ENCODE measurements at regions of chr5 and their contacts with region 1.

Region 1: DNA sequence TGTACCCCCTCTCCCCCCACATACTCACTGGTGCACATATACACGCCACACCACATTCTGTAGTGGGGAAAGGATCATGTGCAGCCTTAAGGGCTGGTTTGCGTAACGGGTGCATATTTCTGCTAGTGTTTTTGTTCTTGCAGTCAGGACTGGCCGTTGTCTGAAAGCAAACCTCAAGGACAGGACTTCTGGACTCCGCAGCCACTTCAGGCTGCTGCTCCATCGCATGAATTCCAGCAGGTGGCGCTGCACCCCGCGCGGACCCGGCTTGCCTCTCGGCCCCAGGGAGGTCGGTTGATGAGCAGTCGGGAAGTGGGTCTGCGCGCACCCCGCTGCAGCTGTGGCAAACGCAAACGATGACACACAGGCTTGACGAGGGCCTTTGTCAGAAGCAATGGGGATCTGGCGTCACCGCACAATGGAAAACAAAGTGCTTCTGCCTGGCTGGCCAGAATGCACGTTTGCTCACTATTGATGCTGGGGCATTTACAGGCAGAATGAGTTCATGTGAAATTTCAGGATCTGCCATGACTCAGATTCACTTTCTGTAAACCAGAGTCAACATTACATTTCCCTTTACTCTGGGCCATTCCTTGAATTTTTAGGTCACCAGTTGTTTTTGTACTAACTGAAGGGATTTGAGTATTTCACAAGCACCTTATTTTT is 36.3 kb upstream of the GLRX start:
- DNase-seq: peak; percentile 76 to 95 (median 92)
- ATAC-seq: peak; percentile 98
- H3K4me3 ChIP-seq: no peak overlapping the region
- H3K4me3 Mint-ChIP-seq: peak overlapping the region; percentile 47
- H3K27ac ChIP-seq: no peak overlapping the region
- H3K27ac Mint-ChIP-seq: peak overlapping the region; percentile 34
- H3K4me1 ChIP-seq: peaks cover 9% of the 10 kb centered on the region
- H3K4me1 Mint-ChIP-seq: peaks cover 25% of the 10 kb centered on the region
- H3K27me3 ChIP-seq: no peaks in the 10 kb centered on the region
- H3K27me3 Mint-ChIP-seq: peaks cover 10% of the 10 kb centered on the region
- CTCF ChIP-seq: peak; percentile 93

Region 2: DNA sequence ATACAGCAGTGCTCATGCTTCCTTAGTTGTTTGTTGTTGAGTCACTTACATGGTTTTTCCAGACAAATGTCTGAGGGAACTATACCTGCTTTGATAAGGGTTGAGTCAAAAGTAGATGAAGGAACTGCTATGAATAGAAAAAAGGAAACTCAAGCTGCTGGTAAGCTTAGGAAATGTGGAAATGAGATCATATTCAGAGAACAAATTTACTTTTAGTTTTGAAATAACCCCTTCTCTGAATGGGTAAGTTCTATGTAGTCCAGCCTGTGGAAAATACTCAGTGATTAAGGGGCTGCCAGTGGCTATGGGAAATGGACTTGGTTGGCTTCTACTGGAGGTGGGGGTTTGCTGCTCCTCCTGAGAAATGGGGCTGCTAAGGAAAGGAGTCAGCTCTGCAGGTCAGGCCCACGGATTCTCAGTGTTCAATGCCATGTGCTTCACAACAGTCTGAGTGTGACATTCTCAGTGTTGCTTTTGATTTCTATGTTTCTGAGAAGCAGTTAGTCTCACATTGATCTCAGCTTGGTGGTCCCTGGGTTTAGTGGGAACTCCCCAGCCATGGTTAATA is 11.4 kb after region 1 on chr5:
- CTCF ChIA-PET with region 1: interaction called, 20 read pairs
- POLR2A ChIA-PET with region 1: interaction called, 5 read pairs
- intact Hi-C with region 1: loop called (anchors 1 kb)
- DNase-seq: peak in 1 of 9 experiments; percentile 35
- ATAC-seq: peak; percentile 33
- H3K4me3 ChIP-seq: no peak overlapping the region
- H3K4me3 Mint-ChIP-seq: peak overlapping the region; percentile 53
- H3K27ac ChIP-seq: no peak overlapping the region
- H3K27ac Mint-ChIP-seq: no peak overlapping the region
- H3K4me1 ChIP-seq: peaks cover 32% of the 10 kb centered on the region
- H3K4me1 Mint-ChIP-seq: peaks cover 31% of the 10 kb centered on the region
- H3K27me3 ChIP-seq: no peaks in the 10 kb centered on the region
- H3K27me3 Mint-ChIP-seq: no peaks in the 10 kb centered on the region
- CTCF ChIP-seq: no peak

Region 3: DNA sequence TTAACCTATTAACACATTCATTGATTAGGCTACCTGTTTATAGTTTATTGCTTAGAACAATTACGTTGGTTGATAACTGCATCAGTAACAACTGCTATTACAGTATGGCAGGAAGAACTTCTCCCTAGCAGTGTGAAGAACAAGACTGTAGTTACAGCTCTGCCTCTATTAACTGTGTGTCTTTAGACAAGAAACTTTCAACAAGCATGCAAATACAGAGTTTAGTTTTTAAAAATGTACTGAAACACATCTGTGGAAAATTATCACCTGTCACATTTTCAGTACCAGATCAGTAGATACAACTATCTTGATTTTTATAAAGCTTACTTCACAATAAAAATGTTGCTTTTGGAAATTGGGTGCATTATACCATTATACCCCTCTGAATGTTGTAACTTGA is 80.7 kb after region 1 on chr5:
- CTCF ChIA-PET with region 1: no interaction called
- POLR2A ChIA-PET with region 1: no interaction called
- intact Hi-C with region 1: no loop called
- DNase-seq: no peak
- ATAC-seq: no peak
- H3K4me3 ChIP-seq: no peak overlapping the region
- H3K4me3 Mint-ChIP-seq: no peak overlapping the region
- H3K27ac ChIP-seq: no peak overlapping the region
- H3K27ac Mint-ChIP-seq: no peak overlapping the region
- H3K4me1 ChIP-seq: no peaks in the 10 kb centered on the region
- H3K4me1 Mint-ChIP-seq: no peaks in the 10 kb centered on the region
- H3K27me3 ChIP-seq: no peaks in the 10 kb centered on the region
- H3K27me3 Mint-ChIP-seq: no peaks in the 10 kb centered on the region
- CTCF ChIP-seq: no peak

Region 4: DNA sequence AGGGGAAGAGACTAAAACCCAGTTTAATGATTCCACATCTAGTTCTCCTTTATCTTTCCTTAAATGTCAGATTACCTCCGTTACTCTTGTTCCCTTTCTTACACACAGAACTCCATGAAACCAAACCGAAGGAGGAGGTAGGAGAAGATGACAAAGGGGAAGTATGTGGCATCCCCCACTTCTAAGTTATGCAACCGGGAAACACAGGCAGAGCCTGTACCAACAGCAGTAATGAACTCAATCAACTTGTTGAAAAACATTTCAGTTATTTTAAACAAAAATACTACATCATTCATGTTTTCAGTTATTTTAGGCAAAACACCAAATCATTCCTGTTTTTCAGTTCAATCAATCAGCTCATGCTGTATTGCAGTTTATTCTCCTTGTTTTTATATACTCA is 472.4 kb after region 1 on chr5:
- CTCF ChIA-PET with region 1: interaction called, 312 read pairs
- POLR2A ChIA-PET with region 1: no interaction called
- intact Hi-C with region 1: loop called (anchors 1 kb)
- DNase-seq: no peak
- ATAC-seq: no peak
- H3K4me3 ChIP-seq: no peak overlapping the region
- H3K4me3 Mint-ChIP-seq: no peak overlapping the region
- H3K27ac ChIP-seq: no peak overlapping the region
- H3K27ac Mint-ChIP-seq: no peak overlapping the region
- H3K4me1 ChIP-seq: no peaks in the 10 kb centered on the region
- H3K4me1 Mint-ChIP-seq: no peaks in the 10 kb centered on the region
- H3K27me3 ChIP-seq: peaks cover 0 to 4% of the 10 kb centered on the region in 2 experiments
- H3K27me3 Mint-ChIP-seq: peaks cover 12% of the 10 kb centered on the region
- CTCF ChIP-seq: no peak

Region 5: GRCh38 chr5:96463106-96463505 is 604.3 kb after region 1 on chr5:
- CTCF ChIA-PET with region 1: no interaction called
- POLR2A ChIA-PET with region 1: no interaction called
- intact Hi-C with region 1: no loop called
- DNase-seq: no peak
- ATAC-seq: no peak
- H3K4me3 ChIP-seq: no peak overlapping the region
- H3K4me3 Mint-ChIP-seq: no peak overlapping the region
- H3K27ac ChIP-seq: no peak overlapping the region
- H3K27ac Mint-ChIP-seq: no peak overlapping the region
- H3K4me1 ChIP-seq: no peaks in the 10 kb centered on the region
- H3K4me1 Mint-ChIP-seq: no peaks in the 10 kb centered on the region
- H3K27me3 ChIP-seq: no peaks in the 10 kb centered on the region
- H3K27me3 Mint-ChIP-seq: peaks cover 8% of the 10 kb centered on the region
- CTCF ChIP-seq: no peak